Heart left ventricle (tissue), 16 donors: ENCODE measurements at regions of chr1 and their contacts with region 1.

Region 1: GRCh38 chr1:178189814-178190213 is 95.9 kb downstream of the RASAL2 start:
- DNase-seq: peak in 3 of 5 donors; percentile 36 to 38 (median 36)
- ATAC-seq: peak in 3 of 4 donors; percentile 78 to 79 (median 78)
- H3K4me3 ChIP-seq: no peak overlapping the region
- H3K27ac ChIP-seq: no peak overlapping the region
- H3K4me1 ChIP-seq: peaks cover 0 to 52% (median 17%) of the 10 kb centered on the region in 12 donors
- H3K27me3 ChIP-seq: no peaks in the 10 kb centered on the region
- CTCF ChIP-seq: peak; percentile 40 to 74 (median 56)
- POLR2A ChIP-seq: no peak

Region 2: DNA sequence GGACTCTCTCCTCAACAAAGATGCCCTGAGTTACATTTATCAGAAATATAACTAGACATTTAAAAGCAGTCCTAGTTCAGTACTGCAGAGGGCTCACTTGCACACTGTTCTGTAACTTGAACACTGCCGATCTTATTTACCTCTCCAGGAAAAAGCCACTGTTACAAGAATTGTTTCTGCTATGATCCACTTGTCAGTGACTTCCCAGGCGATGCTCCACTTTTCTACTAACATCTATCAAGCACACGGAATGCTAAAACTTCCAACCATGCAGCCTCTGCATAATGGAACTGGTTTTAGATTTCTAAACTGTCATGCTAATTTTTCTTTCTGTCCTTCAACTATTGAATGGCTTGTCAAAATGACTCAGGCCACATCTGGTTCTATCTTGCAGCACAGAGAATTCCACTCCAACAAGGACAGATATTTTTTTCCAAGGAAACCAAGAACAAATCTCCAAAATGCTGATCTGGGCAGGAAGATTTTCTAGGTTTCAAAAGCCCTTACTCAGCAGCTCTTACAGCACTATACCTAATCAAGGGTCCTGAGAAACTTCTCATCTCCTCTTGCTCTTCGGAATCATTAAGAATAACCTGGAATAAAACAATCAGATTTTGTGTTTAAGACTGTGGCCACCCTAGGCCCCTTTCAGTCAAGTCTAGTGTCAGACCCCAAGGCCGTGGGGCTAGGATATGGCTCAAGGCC is 229.9 kb before region 1 on chr1:
- intact Hi-C with region 1: loop called in 1 of 10 experiments (anchors 10 kb)
- DNase-seq: no peak
- ATAC-seq: peak; percentile 50 to 80 (median 70)
- H3K4me3 ChIP-seq: no peak overlapping the region
- H3K27ac ChIP-seq: no peak overlapping the region
- H3K4me1 ChIP-seq: no peaks in the 10 kb centered on the region
- H3K27me3 ChIP-seq: no peaks in the 10 kb centered on the region
- CTCF ChIP-seq: peak in 10 of 12 donors; percentile 16 to 52 (median 32)
- POLR2A ChIP-seq: no peak

Region 3: DNA sequence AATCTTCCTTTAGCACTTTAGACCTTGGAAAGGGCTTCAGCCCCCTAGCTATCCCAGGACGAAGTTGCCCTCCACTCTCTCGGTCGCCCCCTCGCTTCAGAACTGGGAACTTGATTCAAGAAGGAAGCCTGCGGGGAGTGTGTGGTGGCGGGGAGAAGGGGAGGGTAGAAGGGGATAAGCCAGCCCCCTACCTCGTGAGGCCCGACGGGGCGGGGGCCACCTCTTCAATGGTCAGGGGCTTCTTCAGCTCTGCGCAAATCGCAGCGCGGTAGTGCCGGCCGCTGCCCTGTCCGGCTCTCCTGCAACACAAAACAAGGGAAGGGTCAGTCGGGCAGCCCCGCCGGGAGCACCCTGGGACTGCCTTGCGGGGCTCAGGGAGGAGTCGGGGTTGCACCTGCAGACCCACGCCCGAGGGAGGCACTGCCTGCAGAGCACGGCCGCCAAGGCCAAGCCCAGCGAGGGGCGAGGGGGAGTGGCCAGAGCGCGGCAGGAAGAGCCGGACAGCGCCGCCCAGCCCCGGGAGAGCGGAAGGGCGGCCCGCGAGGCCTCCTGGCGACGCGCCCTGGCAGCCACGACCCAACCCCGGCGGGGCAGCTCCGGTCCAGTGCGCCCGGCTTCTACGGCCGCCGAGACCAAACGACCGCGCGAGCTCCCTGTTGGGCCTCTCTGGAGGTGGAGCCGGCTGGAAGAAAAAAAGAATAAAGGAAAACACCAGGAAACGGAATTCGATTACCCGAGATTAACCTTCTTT is 152.1 kb before region 1 on chr1:
- intact Hi-C with region 1: loop called in 5 of 10 experiments (anchors 1 to 5 kb)
- DNase-seq: peak; percentile 91 to 95 (median 94)
- ATAC-seq: peak; percentile 89 to 99 (median 98)
- H3K4me3 ChIP-seq: peak overlapping the region; percentile 61 to 97 (median 78)
- H3K27ac ChIP-seq: peak overlapping the region; percentile 61 to 94 (median 86)
- H3K4me1 ChIP-seq: peaks cover 0 to 45% (median 9%) of the 10 kb centered on the region in 12 donors
- H3K27me3 ChIP-seq: no peaks in the 10 kb centered on the region
- CTCF ChIP-seq: peak; percentile 20 to 71 (median 56)
- POLR2A ChIP-seq: peak in 1 of 2 donors; percentile 66

Region 4: DNA sequence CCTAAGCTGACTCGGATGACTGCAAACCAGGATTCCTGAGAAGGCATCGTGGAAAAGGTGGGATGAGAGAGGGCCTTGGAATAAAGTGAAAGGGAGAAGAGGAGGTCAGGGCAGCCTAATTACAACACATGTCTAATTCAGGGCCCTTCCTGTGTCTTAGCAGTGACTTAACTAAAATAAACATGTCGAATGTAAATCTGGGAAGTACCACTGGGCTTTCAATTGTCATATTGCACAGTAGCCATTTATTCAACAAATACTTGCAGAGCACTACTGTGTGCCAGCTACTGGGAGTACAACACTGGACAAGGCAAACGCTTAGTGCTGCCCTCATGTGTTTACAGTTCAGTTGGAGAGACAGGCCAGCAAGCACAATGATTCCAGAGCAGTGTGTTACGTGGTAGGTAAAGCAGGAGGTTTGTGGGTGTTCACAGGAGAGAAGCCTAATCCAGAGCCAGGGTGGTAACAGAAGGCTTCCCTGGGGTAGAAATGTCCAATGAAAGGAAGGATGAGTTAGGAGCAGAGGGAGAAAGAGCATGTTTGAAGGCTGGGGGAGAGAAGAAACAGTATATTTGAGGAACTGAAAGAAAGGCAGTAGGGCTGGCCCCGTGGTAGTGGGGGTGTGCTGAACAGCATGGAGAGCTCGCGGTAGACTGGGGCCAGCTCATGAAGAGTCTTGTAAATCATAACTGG is 133.9 kb before region 1 on chr1:
- intact Hi-C with region 1: loop called in 8 of 10 experiments (anchors 2 to 10 kb)
- DNase-seq: peak in 2 of 5 donors; percentile 42 to 61
- ATAC-seq: peak; percentile 38 to 65 (median 62)
- H3K4me3 ChIP-seq: no peak overlapping the region
- H3K27ac ChIP-seq: peak overlapping the region; percentile 77 to 96 (median 84)
- H3K4me1 ChIP-seq: peaks cover 19 to 88% (median 64%) of the 10 kb centered on the region in 12 donors
- H3K27me3 ChIP-seq: no peaks in the 10 kb centered on the region
- CTCF ChIP-seq: peak in 10 of 12 donors; percentile 5 to 52 (median 25)
- POLR2A ChIP-seq: no peak

Region 5: DNA sequence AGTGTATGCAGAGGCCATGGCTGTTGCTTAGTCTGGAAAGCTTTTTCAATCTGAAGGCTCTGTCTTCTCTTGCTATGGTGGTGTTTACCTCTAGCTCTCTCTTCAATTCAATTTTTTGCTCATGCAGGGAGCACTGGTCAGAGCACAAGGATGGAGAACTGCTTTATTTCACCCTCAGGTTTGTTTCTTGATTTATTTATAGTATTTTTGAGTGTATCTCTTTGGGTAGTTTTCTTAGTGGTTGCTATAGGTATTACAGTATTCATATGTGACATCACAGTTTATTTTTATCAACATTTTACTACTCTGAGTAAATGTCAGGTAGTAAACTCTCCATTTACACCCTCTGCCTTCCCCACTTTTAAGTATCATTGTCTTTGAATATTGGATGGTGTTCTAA is 52.0 kb after region 1 on chr1:
- intact Hi-C with region 1: loop called in 1 of 10 experiments (anchors 10 kb)
- DNase-seq: no peak
- ATAC-seq: no peak
- H3K4me3 ChIP-seq: no peak overlapping the region
- H3K27ac ChIP-seq: no peak overlapping the region
- H3K4me1 ChIP-seq: peaks cover 0 to 21% (median 7%) of the 10 kb centered on the region in 12 donors
- H3K27me3 ChIP-seq: no peaks in the 10 kb centered on the region
- CTCF ChIP-seq: peak in 3 of 12 donors; percentile 35 to 67 (median 49)
- POLR2A ChIP-seq: no peak

Region 6: DNA sequence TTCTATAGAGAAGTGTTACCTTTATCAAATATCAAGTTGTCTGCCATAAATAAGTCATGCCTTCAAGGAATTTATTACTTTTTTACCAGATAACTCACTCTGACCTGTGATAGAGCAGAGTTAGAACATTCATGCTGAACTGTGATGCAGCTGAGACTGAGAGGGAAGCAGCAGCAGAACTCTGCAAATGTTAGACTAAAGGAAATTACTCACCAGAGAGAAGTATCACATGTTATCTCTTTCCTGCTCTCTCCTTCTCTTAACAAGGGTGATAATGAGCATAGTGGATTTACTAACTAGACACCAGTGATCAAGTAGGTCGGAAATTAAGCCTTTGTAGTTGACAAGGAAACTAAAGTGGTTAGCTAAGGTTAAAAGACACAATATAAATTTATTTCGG is 85.7 kb after region 1 on chr1:
- intact Hi-C with region 1: loop called in 1 of 10 experiments (anchors 5 kb)
- DNase-seq: no peak
- ATAC-seq: no peak
- H3K4me3 ChIP-seq: no peak overlapping the region
- H3K27ac ChIP-seq: peak overlapping the region in 1 of 12 donors; percentile 1
- H3K4me1 ChIP-seq: peaks cover 0 to 47% (median 20%) of the 10 kb centered on the region in 12 donors
- H3K27me3 ChIP-seq: no peaks in the 10 kb centered on the region
- CTCF ChIP-seq: no peak
- POLR2A ChIP-seq: no peak